ENCODE measurements at regions of chr7 and their contacts with region 1.

Region 1: DNA sequence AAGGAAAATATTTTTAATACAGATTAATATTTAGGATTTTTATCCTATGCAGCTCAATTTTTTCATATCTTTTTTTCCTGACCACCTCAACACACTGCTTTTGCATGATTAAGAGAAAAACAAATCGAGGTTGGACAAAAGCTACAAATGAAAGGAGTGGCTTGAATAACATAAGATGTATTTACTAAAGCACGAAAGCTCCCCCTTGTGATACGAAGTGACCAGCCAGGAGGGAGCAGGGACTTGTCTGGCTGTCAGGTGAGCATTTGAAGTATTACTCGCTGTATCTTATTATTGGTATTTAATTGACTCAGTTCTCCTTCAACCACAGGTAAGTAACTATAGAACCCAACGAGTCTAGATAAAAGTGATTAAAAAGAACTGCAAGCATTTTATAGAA is 265.2 kb upstream of the PHF14 start:
- DNase-seq: peak; percentile 11
- ATAC-seq: peak; percentile 85
- H3K4me3 ChIP-seq: no peak overlapping the region
- H3K27ac ChIP-seq: no peak overlapping the region
- H3K4me1 ChIP-seq: no peaks in the 10 kb centered on the region
- H3K27me3 ChIP-seq: no peaks in the 10 kb centered on the region
- CTCF ChIP-seq: 0 out of 2 replicates have a peak, but pooled peaks have one; percentile 25

Region 2: DNA sequence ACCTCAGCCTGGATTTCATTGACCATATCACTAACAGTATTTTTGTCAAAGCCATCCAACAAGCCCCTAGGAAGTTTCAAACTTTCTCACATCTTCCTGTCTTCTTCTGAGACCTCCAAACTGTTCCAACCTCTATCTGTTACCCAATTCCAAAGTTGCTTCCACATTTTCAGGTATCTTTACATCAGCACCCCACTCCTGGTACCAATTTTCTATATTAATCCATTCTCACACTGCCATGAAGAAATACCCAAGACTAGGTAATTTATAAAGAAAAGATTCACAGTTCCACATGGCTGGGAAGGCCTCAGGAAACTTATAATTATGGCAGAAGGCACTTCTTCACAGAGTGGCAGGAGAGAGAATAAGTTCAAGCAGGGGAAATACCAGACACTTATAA is 306.7 kb before region 1 on chr7:
- CTCF ChIA-PET with region 1: no interaction called
- POLR2A ChIA-PET with region 1: no interaction called
- intact Hi-C with region 1: loop called (anchors 1 kb)
- DNase-seq: no peak
- ATAC-seq: no peak
- H3K4me3 ChIP-seq: no peak overlapping the region
- H3K27ac ChIP-seq: no peak overlapping the region
- H3K4me1 ChIP-seq: no peaks in the 10 kb centered on the region
- H3K27me3 ChIP-seq: no peaks in the 10 kb centered on the region
- CTCF ChIP-seq: no peak

Region 3: DNA sequence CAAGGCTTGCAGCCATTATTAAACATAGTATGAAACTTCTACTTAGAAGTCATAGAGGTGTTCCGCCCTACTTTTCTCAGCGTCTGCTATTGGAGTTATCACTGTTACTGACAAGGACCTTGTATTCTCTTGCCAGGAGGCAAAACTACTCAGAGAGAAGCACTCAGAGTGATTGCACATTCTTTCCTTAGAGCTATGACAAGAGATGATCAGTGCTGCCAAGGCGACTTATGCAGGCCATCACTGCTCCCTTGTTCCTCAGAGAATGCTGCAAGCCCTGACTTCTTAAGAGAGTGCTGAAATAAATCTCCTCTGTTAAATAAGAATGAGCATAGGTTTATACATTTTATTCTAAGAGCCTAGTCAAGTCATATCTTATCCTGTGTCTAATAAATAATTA is 269.4 kb before region 1 on chr7:
- CTCF ChIA-PET with region 1: no interaction called
- POLR2A ChIA-PET with region 1: no interaction called
- intact Hi-C with region 1: loop called (anchors 10 kb)
- DNase-seq: no peak
- ATAC-seq: no peak
- H3K4me3 ChIP-seq: no peak overlapping the region
- H3K27ac ChIP-seq: no peak overlapping the region
- H3K4me1 ChIP-seq: no peaks in the 10 kb centered on the region
- H3K27me3 ChIP-seq: no peaks in the 10 kb centered on the region
- CTCF ChIP-seq: no peak

Region 4: DNA sequence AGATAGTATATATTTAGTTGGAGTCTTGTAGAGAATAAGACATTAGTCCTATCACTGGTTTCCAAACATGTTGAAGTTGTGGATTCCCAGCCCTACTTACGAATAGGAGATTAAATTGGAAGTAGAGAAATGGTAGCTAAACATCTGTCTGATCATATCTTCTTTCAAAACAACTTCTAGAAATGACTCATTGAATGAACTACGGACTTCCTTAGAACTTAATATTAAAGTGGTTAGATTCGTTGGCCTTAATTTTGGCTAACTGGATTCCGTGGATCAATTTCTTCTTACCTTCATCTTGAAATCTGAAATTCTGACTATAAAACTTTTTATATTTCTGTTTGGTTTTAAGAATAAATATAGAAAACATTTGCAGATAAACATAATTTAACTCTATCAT is 268.7 kb after region 1 on chr7:
- CTCF ChIA-PET with region 1: no interaction called
- POLR2A ChIA-PET with region 1: no interaction called
- intact Hi-C with region 1: no loop called
- DNase-seq: no peak
- ATAC-seq: no peak
- H3K4me3 ChIP-seq: no peak overlapping the region
- H3K27ac ChIP-seq: no peak overlapping the region
- H3K4me1 ChIP-seq: peaks cover 20% of the 10 kb centered on the region
- H3K27me3 ChIP-seq: no peaks in the 10 kb centered on the region
- CTCF ChIP-seq: no peak